ENCODE measurements at regions of chr2 and their contacts with region 1.

Region 1: GRCh38 chr2:27291865-27292264 is 9.6 kb downstream of the TRIM54 start:
- H3K4me3 ChIP-seq: no peak overlapping the region
- H3K27ac ChIP-seq: no peak overlapping the region
- H3K4me1 ChIP-seq: peaks cover 13% of the 10 kb centered on the region
- CTCF ChIP-seq: no peak

Region 2: DNA sequence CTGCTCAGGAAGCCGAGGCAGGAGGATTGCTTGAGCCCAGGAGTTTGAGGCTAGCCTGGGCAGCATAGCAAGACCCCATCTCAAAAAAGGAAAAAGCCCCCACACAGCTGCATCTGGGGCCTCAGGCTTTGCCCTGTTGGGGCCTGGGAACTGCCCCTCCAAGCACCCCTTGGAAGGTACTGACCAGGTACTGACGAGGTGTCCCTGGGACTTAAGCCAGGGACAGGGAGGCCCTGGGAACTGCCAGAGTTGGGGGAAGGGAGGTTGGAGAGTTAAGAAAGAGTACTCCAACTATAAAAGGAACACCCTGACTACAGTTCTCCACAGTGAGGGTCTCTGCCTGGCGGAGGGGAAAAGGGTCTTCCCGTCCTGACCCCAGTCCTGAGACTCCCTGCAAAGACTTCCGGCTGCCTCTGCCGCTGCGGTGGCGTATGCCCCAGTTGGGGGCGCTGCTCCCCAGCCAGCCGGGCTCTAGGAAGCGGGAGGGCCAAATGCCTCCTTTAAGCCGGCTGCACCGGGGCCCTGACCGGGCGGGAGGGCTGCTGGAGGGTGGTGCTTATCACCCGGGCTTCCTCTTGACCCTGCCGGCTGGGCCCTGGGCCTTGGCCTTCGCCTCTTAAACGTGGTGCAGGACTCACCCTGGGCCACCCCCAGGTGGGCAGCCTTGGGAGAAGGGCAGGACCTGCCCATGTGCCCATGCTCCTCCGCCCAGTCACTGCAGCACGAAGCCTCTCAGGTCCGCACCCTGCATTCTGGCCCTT is 41.8 kb before region 1 on chr2:
- CTCF ChIA-PET with region 1: interaction called, 14 read pairs
- POLR2A ChIA-PET with region 1: no interaction called
- H3K4me3 ChIP-seq: no peak overlapping the region
- H3K27ac ChIP-seq: no peak overlapping the region
- H3K4me1 ChIP-seq: 0 out of 2 replicates have a peak, but pooled peaks cover 4% of the 10 kb centered on the region
- CTCF ChIP-seq: peak; percentile 79